T-cell (primary cell): ENCODE measurements at regions of chr11 and their contacts with region 1.

Region 1: DNA sequence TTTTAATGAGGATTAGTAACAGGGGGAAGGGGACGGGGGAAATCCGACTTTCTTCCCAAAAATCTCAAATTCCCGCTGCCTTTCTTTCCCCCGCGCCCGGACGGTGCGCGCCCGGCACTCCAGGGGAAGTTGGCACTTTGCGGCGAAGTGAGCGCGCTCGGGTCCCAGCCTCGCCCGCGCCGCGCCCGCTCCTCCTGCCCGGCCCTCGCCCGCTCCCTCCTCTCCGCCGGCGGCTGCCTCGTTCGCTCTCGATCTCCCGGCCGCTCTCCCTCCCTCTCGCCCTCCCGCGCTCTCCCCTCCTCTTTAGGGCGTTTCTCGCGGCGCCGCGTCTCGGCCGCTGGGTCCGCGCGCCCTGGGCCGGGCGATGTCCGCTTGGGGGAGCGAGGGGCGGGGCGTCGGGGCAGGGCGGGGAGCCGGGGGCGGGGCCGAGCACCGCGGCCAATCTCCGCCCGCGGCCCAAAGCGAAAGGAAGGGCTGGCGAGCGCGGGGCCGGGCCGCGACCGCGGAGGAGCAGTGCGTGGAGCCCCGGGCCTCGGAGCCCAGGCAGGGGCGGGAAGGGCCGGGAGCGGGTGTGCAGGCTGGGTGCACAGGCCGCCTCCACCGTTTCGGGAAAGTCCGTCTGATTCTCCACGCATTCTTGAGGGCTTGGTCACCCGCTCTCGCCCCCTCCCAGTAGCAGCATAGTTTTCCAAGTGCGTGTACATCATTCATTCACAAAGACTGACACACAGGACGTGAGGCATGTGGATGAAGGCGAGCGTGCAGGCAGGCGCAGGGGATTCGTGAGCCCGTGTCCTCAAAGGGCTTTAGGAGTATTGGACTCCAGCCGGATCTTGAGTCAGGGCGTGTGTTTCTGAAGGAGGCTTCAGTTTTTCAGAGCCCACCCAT is 65.1 kb downstream of the ETS1 start:
- DNase-seq: peak; percentile 70 to 93 (median 80)
- ATAC-seq: peak; percentile 76 to 82 (median 80)
- H3K4me3 ChIP-seq: peak overlapping the region; percentile 68 to 99
- H3K4me3 Mint-ChIP-seq: peak overlapping the region; percentile 96 to 99 (median 98)
- H3K27ac ChIP-seq: peak overlapping the region; percentile 93
- H3K27ac Mint-ChIP-seq: peak overlapping the region; percentile 98
- H3K4me1 ChIP-seq: peaks cover 37 to 40% of the 10 kb centered on the region in 2 experiments
- H3K4me1 Mint-ChIP-seq: peaks cover 45 to 65% (median 50%) of the 10 kb centered on the region in 3 donors
- H3K27me3 ChIP-seq: no peaks in the 10 kb centered on the region
- H3K27me3 Mint-ChIP-seq: no peaks in the 10 kb centered on the region

Region 2: GRCh38 chr11:128302425-128303186 is 219.7 kb before region 1 on chr11:
- CTCF ChIA-PET with region 1: interaction called in 1 of 2 experiments, 8 read pairs
- POLR2A ChIA-PET with region 1: interaction called, 3 to 20 read pairs
- DNase-seq: peak in 34 of 35 experiments; percentile 47 to 94 (median 74)
- ATAC-seq: peak; percentile 85 to 90 (median 88)
- H3K4me3 ChIP-seq: peak overlapping the region; percentile 56 to 60
- H3K4me3 Mint-ChIP-seq: peak overlapping the region; percentile 83 to 91 (median 84)
- H3K27ac ChIP-seq: peak overlapping the region; percentile 99
- H3K27ac Mint-ChIP-seq: peak overlapping the region; percentile 98
- H3K4me1 ChIP-seq: peaks cover 72 to 80% of the 10 kb centered on the region in 2 experiments
- H3K4me1 Mint-ChIP-seq: peaks cover 90 to 97% (median 95%) of the 10 kb centered on the region in 3 donors
- H3K27me3 ChIP-seq: no peaks in the 10 kb centered on the region
- H3K27me3 Mint-ChIP-seq: no peaks in the 10 kb centered on the region

Region 3: DNA sequence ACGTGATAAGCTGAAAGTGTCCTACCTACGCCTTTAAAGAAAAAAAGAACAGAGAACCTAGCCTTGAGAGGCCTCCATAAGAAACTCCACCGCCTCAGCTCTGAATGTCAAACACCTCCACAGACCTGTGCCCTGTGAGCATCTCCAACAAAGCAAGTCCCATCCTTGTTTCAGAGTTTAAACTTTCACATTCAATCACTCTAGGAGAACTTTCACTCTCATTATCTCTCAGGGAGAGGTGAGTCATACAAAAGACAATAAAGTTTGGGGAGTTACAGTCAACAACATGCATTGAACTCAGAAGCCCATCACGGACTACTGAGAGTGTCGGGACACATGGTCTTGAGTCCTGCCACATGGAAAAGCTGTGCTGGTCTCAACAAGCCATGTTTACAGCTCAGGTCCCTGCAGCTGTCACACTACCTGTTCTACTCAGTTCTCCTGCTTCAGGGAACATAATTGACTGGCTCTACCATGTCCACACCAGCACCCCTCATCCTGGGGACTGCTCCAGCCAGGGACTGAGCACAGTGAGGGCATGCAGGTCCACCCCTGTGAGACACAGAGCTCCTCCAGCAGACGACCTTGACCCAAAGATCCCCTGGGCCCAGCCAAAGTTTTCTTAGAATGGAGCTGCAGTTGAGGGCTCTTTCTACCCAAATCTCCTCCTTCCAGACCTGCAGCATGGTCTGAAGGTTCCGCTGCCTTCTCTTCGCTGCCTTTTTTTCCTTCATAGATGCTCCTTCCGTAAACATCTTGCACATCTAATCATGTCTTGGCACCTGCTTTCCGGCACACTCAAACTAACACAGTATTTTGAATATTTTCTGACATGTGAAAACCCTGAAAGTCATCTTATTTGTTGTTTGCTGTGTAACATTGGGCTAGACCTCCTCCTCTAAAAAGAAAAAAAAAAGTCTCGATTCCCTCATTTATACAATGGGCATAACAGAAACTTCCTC is 49.9 kb before region 1 on chr11:
- CTCF ChIA-PET with region 1: interaction called in 1 of 2 experiments, 11 read pairs
- POLR2A ChIA-PET with region 1: interaction called, 4 to 17 read pairs
- DNase-seq: peak in 4 of 35 experiments; percentile 42 to 70 (median 52)
- ATAC-seq: peak; percentile 12 to 43 (median 30)
- H3K4me3 ChIP-seq: peak overlapping the region; percentile 18 to 42
- H3K4me3 Mint-ChIP-seq: peak overlapping the region; percentile 62 to 99 (median 66)
- H3K27ac ChIP-seq: peak overlapping the region; percentile 96
- H3K27ac Mint-ChIP-seq: peak overlapping the region; percentile 93 to 98
- H3K4me1 ChIP-seq: peaks cover 83 to 86% of the 10 kb centered on the region in 2 experiments
- H3K4me1 Mint-ChIP-seq: peaks cover 100% of the 10 kb centered on the region in 3 donors
- H3K27me3 ChIP-seq: no peaks in the 10 kb centered on the region
- H3K27me3 Mint-ChIP-seq: no peaks in the 10 kb centered on the region

Region 4: GRCh38 chr11:128506999-128507611 is 15.2 kb before region 1 on chr11:
- CTCF ChIA-PET with region 1: interaction called, 6 to 28 read pairs
- POLR2A ChIA-PET with region 1: interaction called, 29 to 86 read pairs
- DNase-seq: peak in 12 of 35 experiments; percentile 28 to 59 (median 48)
- ATAC-seq: peak; percentile 7 to 26 (median 18)
- H3K4me3 ChIP-seq: peak overlapping the region; percentile 48 to 67
- H3K4me3 Mint-ChIP-seq: peak overlapping the region; percentile 82 to 99 (median 98)
- H3K27ac ChIP-seq: peak overlapping the region; percentile 78
- H3K27ac Mint-ChIP-seq: peak overlapping the region; percentile 96 to 98
- H3K4me1 ChIP-seq: peaks cover 85 to 88% of the 10 kb centered on the region in 2 experiments
- H3K4me1 Mint-ChIP-seq: peaks cover 97 to 100% (median 99%) of the 10 kb centered on the region in 3 donors
- H3K27me3 ChIP-seq: no peaks in the 10 kb centered on the region
- H3K27me3 Mint-ChIP-seq: no peaks in the 10 kb centered on the region

Region 5: GRCh38 chr11:128624269-128625175 is 102.2 kb after region 1 on chr11:
- CTCF ChIA-PET with region 1: interaction called in 1 of 2 experiments, 76 read pairs
- POLR2A ChIA-PET with region 1: interaction called, 5 to 24 read pairs
- DNase-seq: peak; percentile 48 to 84 (median 68)
- ATAC-seq: peak; percentile 67 to 74 (median 72)
- H3K4me3 ChIP-seq: peak overlapping the region; percentile 8 to 41
- H3K4me3 Mint-ChIP-seq: peak overlapping the region; percentile 70 to 75 (median 70)
- H3K27ac ChIP-seq: peak overlapping the region; percentile 90
- H3K27ac Mint-ChIP-seq: peak overlapping the region; percentile 99 to 100
- H3K4me1 ChIP-seq: peaks cover 86 to 90% of the 10 kb centered on the region in 2 experiments
- H3K4me1 Mint-ChIP-seq: peaks cover 96 to 99% (median 98%) of the 10 kb centered on the region in 3 donors
- H3K27me3 ChIP-seq: no peaks in the 10 kb centered on the region
- H3K27me3 Mint-ChIP-seq: peaks cover 0 to 1% of the 10 kb centered on the region in 2 donors